ENCODE measurements at regions of chr11 and their contacts with region 1.

Region 1: DNA sequence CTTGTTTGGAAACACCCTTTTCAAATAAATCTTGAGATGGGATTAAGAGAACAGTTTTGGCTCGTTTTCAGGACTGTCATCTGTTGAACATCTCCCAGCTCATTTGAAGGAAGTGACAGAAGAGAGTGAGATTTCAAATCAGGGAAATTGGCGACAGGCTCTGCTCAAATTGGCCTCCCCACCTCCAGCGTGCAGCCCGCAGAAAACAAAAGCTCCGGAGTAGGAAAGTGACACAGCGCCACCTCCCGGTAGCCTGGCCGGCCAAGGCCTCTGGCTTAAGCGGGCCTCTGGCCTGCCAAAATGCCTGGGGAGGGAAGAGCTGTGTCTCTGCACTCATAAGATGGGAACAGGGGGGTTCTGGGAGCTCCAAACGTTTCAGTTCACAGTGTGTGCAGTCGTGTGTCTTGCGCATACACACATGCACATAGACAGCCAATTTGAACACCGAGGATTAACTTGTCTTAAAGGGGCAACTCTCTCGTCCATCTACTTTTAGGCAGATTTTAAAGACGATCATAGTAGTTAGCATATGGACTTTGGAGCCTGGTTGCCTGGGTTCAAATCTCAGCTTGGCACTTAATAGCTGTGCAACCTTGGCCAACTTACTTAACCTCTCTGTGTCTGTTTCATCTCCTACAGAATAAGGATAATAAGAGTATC is 132.7 kb upstream of the RCN1 start:
- DNase-seq: peak; percentile 66
- H3K4me3 Mint-ChIP-seq: no peak overlapping the region
- H3K27ac Mint-ChIP-seq: no peak overlapping the region
- H3K4me1 Mint-ChIP-seq: no peaks in the 10 kb centered on the region
- H3K27me3 Mint-ChIP-seq: peaks cover 3% of the 10 kb centered on the region

Region 2: GRCh38 chr11:31107062-31107461 is 851.1 kb before region 1 on chr11:
- CTCF ChIA-PET with region 1: interaction called, 22 read pairs
- POLR2A ChIA-PET with region 1: no interaction called
- DNase-seq: peak; percentile 47
- H3K4me3 Mint-ChIP-seq: no peak overlapping the region
- H3K27ac Mint-ChIP-seq: no peak overlapping the region
- H3K4me1 Mint-ChIP-seq: no peaks in the 10 kb centered on the region
- H3K27me3 Mint-ChIP-seq: no peaks in the 10 kb centered on the region

Region 3: GRCh38 chr11:31987118-31988005 is 29.2 kb after region 1 on chr11:
- CTCF ChIA-PET with region 1: no interaction called
- POLR2A ChIA-PET with region 1: no interaction called
- DNase-seq: no peak
- H3K4me3 Mint-ChIP-seq: no peak overlapping the region
- H3K27ac Mint-ChIP-seq: no peak overlapping the region
- H3K4me1 Mint-ChIP-seq: no peaks in the 10 kb centered on the region
- H3K27me3 Mint-ChIP-seq: peaks cover 28% of the 10 kb centered on the region

Region 4: GRCh38 chr11:32052218-32052617 is 94.0 kb after region 1 on chr11:
- CTCF ChIA-PET with region 1: no interaction called
- POLR2A ChIA-PET with region 1: no interaction called
- DNase-seq: peak; percentile 49
- H3K4me3 Mint-ChIP-seq: no peak overlapping the region
- H3K27ac Mint-ChIP-seq: no peak overlapping the region
- H3K4me1 Mint-ChIP-seq: no peaks in the 10 kb centered on the region
- H3K27me3 Mint-ChIP-seq: peaks cover 29% of the 10 kb centered on the region